Activated T-helper 1 cell treated with anti-CD3 and anti-CD28 coated beads, Interleukin-12 subunit alpha, Interleukin-12 subunit beta, Interleukin-2, Interleukin-4 antibody, amounts not matched to agents 30 ng/mL and 10 ng/mL and 1 ng/mL, durations not matched to agents 14 hours and 24 hours and 36 hours (primary cell): ENCODE measurements at regions of chr1 and their contacts with region 1.

Region 1: DNA sequence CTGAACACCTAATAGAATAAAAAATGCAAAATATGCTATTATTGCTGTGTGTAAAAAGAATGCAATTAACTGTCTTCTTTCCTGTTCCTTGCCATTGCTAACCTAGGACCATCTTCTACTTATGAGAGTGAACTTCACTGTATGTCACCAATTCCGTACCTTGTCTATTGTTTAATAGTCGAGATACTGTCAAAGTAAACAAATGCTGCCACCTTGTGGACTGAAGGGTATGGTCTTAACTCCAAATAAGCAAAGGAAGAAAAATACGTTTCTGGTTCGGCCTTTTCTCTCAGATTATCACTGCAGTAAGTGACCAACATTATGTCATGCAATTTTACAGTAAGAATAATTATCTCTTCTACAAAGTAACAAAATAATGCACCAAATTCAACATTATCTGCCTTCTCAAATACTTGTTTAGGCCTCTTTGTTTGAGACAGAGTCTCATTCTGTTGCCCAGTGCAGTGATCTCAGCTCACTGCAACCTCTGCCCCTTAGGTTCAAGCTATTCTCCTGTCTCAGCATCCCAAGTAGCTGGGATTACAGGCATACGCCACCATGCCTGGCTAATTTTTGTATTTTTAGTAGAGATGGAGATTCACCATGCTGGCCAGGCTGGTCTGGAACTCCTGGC is 133.4 kb downstream of the COP1 start:
- DNase-seq: no peak
- H3K4me3 Mint-ChIP-seq: no peak overlapping the region
- H3K27ac Mint-ChIP-seq: no peak overlapping the region
- H3K4me1 Mint-ChIP-seq: no peaks in the 10 kb centered on the region
- H3K27me3 Mint-ChIP-seq: no peaks in the 10 kb centered on the region

Region 2: DNA sequence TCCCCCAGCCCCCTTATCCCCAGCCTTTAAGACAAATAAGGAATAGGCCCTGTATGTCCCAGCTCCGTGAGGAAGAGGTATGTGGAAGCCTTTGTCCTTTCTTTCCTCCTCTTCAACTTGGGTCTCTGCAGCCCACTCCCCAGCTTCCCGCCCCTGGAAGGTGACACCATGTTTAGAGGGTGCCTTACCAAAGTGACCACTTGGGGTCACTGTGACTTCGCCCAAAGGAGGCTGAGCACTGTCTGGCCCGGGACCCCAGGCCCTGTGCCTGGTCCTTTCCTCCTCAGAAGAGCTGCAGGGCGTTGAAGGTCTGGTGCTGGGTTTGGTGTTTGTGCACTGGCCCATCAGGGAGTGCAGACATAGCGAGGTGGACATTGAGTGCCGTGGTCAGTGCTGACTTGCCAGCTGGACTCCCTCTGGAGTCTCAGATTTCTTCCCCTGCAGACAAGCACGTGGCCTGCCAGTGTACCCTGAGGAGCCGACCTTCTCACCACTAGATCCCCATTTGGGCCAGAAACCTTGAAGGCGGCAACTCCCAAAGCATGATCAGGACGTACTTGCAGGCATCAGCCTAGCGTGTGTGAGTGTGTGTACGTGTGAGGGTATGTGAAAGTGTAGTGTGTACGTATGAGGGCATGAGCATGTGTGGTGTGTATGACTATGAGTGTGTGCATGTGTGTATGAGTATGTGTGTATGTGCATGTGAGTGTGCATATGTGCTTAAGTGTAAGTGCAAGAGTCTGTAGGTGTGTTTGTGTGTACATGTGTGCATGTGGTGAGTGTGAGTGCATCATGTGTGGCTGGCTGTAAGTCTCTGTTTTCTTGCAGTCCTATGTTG is 699.6 kb before region 1 on chr1:
- intact Hi-C with region 1: loop called (anchors 10 kb)
- DNase-seq: no peak
- H3K4me3 Mint-ChIP-seq: no peak overlapping the region
- H3K27ac Mint-ChIP-seq: no peak overlapping the region
- H3K4me1 Mint-ChIP-seq: no peaks in the 10 kb centered on the region
- H3K27me3 Mint-ChIP-seq: peaks cover 10% of the 10 kb centered on the region

Region 3: GRCh38 chr1:175887981-175888433 is 185.6 kb before region 1 on chr1:
- intact Hi-C with region 1: loop called (anchors 10 kb)
- DNase-seq: no peak
- H3K4me3 Mint-ChIP-seq: no peak overlapping the region
- H3K27ac Mint-ChIP-seq: no peak overlapping the region
- H3K4me1 Mint-ChIP-seq: no peaks in the 10 kb centered on the region
- H3K27me3 Mint-ChIP-seq: no peaks in the 10 kb centered on the region